ENCODE measurements at regions of chr3 and their contacts with region 1.

Region 1: DNA sequence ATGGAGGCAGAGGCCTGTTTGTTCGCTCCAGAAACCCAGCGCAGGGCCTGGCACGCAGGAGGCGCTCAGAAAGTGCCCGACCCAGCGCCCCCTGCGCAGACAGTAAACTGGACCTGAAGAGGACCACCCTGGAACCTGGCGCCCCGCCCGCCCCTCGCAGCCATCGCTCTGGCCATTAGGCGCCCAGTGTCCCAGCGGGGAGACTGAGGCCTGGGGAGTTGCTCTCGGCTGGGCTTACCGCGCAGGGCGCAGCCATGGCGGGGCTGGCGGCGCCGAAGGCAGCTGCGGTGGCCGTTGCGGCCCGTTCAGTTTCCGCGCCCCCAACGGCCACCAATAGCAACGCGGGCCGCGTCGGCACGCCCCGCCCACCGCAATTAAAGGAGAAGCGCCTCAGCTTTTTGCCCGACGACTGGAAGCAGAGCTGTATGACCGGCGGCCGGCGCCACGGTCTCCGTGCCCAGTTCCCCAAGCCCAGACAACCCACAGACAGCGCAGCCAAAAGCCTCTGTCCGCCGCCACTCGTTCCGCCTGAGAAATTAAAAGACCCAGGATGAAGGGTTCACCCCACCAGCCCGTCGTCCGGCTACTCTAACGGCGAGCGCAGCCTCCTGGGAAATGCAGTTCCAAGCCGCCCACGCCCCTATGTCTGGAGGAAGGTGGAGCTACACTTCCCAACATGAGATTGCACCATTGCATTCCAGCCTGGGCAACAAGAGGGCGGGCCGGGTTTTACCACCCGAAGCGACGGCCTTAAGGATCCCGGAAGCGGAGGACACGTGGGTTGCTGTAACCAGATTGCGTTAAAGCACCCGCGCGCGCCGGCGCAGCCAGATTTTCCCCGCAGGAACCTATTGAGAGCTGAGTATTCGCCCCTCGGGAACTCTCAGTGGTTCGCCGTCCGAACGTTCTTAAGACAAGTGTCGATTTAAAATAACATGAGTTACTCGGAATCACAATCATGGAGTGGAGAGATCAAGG is at the start of gene POC1A:
- DNase-seq: peak; percentile 90

Region 2: GRCh38 chr3:51830836-51831385 is 323.5 kb before region 1 on chr3:
- CTCF ChIA-PET with region 1: no interaction called
- POLR2A ChIA-PET with region 1: no interaction called
- DNase-seq: no peak

Region 3: GRCh38 chr3:52144034-52144795 is 10.2 kb before region 1 on chr3:
- CTCF ChIA-PET with region 1: no interaction called
- POLR2A ChIA-PET with region 1: interaction called, 15 read pairs
- DNase-seq: peak; percentile 85

Region 4: GRCh38 chr3:52171514-52172261 is 17.3 kb after region 1 on chr3:
- CTCF ChIA-PET with region 1: no interaction called
- POLR2A ChIA-PET with region 1: interaction called, 10 read pairs
- DNase-seq: no peak

Region 5: DNA sequence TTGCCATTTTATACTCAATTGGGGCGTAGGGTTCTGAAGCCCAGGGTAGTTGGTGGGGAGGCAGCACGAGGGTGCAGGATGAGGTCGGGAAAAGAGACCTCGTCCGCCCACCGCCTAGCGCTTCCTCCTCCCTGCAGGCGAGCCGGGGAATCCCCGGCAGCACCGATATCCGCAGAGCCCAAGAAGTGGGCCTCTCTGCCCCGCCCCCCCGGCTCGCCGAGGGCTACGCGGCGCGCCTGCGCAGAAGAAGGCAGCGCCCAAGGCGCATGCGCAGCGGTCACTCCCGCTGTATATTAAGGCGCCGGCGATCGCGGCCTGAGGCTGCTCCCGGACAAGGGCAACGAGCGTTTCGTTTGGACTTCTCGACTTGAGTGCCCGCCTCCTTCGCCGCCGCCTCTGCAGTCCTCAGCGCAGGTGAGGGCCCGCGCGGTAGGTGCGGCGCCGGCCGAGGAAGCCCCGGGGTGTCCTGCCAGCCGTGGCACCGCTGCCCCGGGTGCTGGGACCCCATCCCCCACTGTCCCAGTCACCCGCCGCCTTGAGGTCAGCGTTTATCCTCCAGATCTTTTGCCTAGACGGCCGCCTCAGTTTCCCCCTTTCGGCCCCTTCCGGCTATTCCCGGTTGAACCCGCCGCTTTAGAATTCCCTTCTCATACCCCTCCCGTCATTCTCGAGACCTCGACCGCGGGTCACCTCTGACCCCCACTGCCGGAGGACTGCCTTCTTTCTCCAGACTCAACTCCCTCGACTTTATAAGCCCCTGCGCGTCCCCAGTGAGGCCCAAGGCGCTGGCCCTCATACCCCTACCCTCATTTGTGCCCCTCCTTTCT is 43.6 kb after region 1 on chr3 and contains the start of gene ALAS1:
- CTCF ChIA-PET with region 1: no interaction called
- POLR2A ChIA-PET with region 1: interaction called, 14 read pairs
- DNase-seq: peak; percentile 99

Region 6: GRCh38 chr3:52248816-52249547 is 94.6 kb after region 1 on chr3:
- CTCF ChIA-PET with region 1: no interaction called
- POLR2A ChIA-PET with region 1: no interaction called
- DNase-seq: no peak